ENCODE measurements at regions of chr20 and their contacts with region 1.

Region 1: GRCh38 chr20:2151858-2152281 is 50.2 kb downstream of the STK35 start:
- DNase-seq: no peak
- H3K4me3 ChIP-seq: no peak overlapping the region
- H3K27ac ChIP-seq: peak overlapping the region in 1 of 2 donors; percentile 9
- H3K4me1 ChIP-seq: peaks cover 0 to 7% of the 10 kb centered on the region in 2 donors
- H3K27me3 ChIP-seq: no peaks in the 10 kb centered on the region
- CTCF ChIP-seq: no peak
- POLR2A ChIP-seq: no peak

Region 2: DNA sequence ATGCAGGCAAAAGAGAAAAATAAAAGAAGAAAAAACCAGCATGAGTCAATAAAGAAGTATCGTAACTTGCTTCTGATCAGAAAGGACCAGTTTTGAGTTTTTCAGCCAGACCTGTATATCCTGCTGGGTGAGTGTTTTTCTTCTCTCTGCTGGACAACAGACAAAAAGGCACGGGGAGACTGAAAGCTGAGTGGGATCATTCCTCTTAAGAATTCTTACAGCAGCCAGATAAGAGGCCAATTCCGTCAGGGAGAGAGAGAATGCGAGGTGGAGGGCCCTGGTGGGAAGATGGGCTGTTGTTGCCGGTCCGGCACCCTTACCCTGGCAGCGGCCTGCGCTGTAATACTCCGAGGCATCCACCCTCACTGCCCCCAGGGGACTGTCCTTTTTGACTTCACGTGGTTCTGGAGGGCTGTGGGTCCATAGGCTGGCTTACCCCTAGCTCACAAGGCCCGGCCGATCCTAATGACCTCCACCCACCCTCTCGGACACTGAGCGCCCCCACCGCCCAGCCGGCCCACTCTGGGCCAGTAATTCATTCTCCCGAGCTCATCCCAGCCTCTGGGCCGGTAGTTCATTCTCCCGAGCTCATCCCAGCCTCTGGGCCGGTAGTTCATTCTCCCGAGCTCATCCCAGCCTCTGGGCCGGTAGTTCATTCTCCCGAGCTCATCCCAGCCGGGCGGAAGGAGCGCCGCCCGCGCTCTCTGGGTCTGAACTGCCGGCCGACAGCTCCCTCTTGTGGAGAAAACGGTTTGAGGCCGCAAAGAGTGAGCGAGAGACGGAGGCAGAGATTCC is 375.0 kb before region 1 on chr20:
- intact Hi-C with region 1: loop called (anchors 10 kb)
- DNase-seq: peak; percentile 84 to 92
- H3K4me3 ChIP-seq: peak overlapping the region; percentile 44 to 71 (median 65)
- H3K27ac ChIP-seq: no peak overlapping the region
- H3K4me1 ChIP-seq: peaks cover 0 to 8% of the 10 kb centered on the region in 2 donors
- H3K27me3 ChIP-seq: no peaks in the 10 kb centered on the region
- CTCF ChIP-seq: peak; percentile 71 to 93 (median 76)
- POLR2A ChIP-seq: no peak

Region 3: DNA sequence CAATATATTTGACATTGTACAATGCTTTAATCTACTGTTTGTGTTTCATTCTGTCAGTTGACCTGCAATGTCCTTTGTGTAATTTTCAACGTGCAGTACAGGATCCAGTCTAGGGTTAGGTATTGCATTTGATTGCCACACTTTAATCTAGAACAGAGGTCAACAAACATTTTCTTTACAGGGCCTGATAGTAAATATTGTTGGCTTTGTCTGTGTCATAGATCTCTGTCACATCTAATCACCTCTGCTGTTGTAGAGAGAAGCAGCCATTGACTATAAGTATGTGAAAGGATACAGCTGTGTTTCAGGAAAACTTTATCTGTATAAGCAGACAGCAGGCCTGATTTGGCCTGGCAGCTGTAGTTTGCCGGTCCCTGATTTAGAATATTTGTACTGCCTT is 1358.2 kb after region 1 on chr20:
- intact Hi-C with region 1: no loop called
- DNase-seq: no peak
- H3K4me3 ChIP-seq: no peak overlapping the region
- H3K27ac ChIP-seq: no peak overlapping the region
- H3K4me1 ChIP-seq: no peaks in the 10 kb centered on the region
- H3K27me3 ChIP-seq: no peaks in the 10 kb centered on the region
- CTCF ChIP-seq: no peak
- POLR2A ChIP-seq: no peak

Measured in breast epithelium (tissue), 4 donors.